ENCODE measurements at regions of chr3 and their contacts with region 1.

Region 1: GRCh38 chr3:10115326-10116137 is at the start of gene BRK1:
- DNase-seq: peak; percentile 98
- ATAC-seq: peak; percentile 96
- H3K4me3 ChIP-seq: peak within 1 kb of the TSS; percentile 61 to 96 (median 84)
- H3K4me3 Mint-ChIP-seq: peak within 1 kb of the TSS; percentile 94
- H3K27ac ChIP-seq: peak within 1 kb of the TSS; percentile 48 to 85
- H3K27ac Mint-ChIP-seq: peak within 1 kb of the TSS; percentile 97
- H3K4me1 ChIP-seq: peaks cover 16 to 27% of the 10 kb centered on the region in 2 donors
- H3K4me1 Mint-ChIP-seq: peaks cover 34% of the 10 kb centered on the region
- H3K27me3 ChIP-seq: no peaks in the 10 kb centered on the region
- H3K27me3 Mint-ChIP-seq: no peaks in the 10 kb centered on the region
- CTCF ChIP-seq: no peak
- total RNA-seq, gene BRK1: 82.8 and 86.3 TPM in 2 replicates

Region 2: GRCh38 chr3:9396700-9397521 is 718.6 kb before region 1 on chr3:
- CTCF ChIA-PET with region 1: no interaction called
- POLR2A ChIA-PET with region 1: no interaction called
- intact Hi-C with region 1: loop called (anchors 2 kb)
- DNase-seq: peak; percentile 99
- ATAC-seq: peak; percentile 70
- H3K4me3 ChIP-seq: peak overlapping the region; percentile 58 to 85 (median 67)
- H3K4me3 Mint-ChIP-seq: peak overlapping the region; percentile 89
- H3K27ac ChIP-seq: peak overlapping the region; percentile 94 to 96
- H3K27ac Mint-ChIP-seq: peak overlapping the region; percentile 100
- H3K4me1 ChIP-seq: peaks cover 40 to 56% of the 10 kb centered on the region in 2 donors
- H3K4me1 Mint-ChIP-seq: peaks cover 60% of the 10 kb centered on the region
- H3K27me3 ChIP-seq: no peaks in the 10 kb centered on the region
- H3K27me3 Mint-ChIP-seq: no peaks in the 10 kb centered on the region
- CTCF ChIP-seq: no peak

Region 3: GRCh38 chr3:9837701-9838582 is 277.6 kb before region 1 on chr3:
- CTCF ChIA-PET with region 1: no interaction called
- POLR2A ChIA-PET with region 1: no interaction called
- intact Hi-C with region 1: no loop called
- DNase-seq: no peak
- ATAC-seq: no peak
- H3K4me3 ChIP-seq: no peak overlapping the region
- H3K4me3 Mint-ChIP-seq: no peak overlapping the region
- H3K27ac ChIP-seq: no peak overlapping the region
- H3K27ac Mint-ChIP-seq: peak overlapping the region; percentile 26
- H3K4me1 ChIP-seq: peaks cover 1 to 8% of the 10 kb centered on the region in 2 donors
- H3K4me1 Mint-ChIP-seq: peaks cover 9% of the 10 kb centered on the region
- H3K27me3 ChIP-seq: no peaks in the 10 kb centered on the region
- H3K27me3 Mint-ChIP-seq: no peaks in the 10 kb centered on the region
- CTCF ChIP-seq: no peak

Region 4: DNA sequence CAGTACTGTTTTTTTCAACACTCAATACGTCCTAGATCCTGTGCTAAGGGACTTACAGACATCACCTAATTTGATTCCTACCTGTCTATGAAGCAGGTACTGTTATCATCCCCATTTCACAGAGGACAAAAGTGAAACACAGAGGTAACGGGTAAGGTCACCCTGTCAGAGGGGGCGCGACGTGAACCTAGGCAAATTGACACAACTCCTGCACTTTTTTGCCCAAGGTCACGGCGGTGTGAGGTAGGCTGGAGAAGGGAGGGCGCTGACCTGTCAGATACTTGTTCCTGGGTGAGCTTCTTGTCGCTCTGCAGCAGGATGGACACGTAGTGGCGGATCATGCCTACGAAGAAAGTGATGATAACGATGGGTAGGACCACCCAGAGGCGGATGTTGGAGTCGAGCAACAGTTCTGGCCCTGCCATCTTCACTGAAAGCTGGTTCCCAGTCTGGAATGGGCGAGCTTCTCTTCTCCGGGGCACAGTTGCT is 129.3 kb before region 1 on chr3:
- CTCF ChIA-PET with region 1: no interaction called
- POLR2A ChIA-PET with region 1: no interaction called
- intact Hi-C with region 1: loop called (anchors 1 kb)
- DNase-seq: no peak
- ATAC-seq: peak; percentile 28
- H3K4me3 ChIP-seq: peak overlapping the region; percentile 71 to 96 (median 82)
- H3K4me3 Mint-ChIP-seq: peak overlapping the region; percentile 98
- H3K27ac ChIP-seq: peak overlapping the region; percentile 88 to 97
- H3K27ac Mint-ChIP-seq: peak overlapping the region; percentile 100
- H3K4me1 ChIP-seq: peaks cover 16 to 22% of the 10 kb centered on the region in 2 donors
- H3K4me1 Mint-ChIP-seq: peaks cover 28% of the 10 kb centered on the region
- H3K27me3 ChIP-seq: no peaks in the 10 kb centered on the region
- H3K27me3 Mint-ChIP-seq: no peaks in the 10 kb centered on the region
- CTCF ChIP-seq: no peak

Region 5: DNA sequence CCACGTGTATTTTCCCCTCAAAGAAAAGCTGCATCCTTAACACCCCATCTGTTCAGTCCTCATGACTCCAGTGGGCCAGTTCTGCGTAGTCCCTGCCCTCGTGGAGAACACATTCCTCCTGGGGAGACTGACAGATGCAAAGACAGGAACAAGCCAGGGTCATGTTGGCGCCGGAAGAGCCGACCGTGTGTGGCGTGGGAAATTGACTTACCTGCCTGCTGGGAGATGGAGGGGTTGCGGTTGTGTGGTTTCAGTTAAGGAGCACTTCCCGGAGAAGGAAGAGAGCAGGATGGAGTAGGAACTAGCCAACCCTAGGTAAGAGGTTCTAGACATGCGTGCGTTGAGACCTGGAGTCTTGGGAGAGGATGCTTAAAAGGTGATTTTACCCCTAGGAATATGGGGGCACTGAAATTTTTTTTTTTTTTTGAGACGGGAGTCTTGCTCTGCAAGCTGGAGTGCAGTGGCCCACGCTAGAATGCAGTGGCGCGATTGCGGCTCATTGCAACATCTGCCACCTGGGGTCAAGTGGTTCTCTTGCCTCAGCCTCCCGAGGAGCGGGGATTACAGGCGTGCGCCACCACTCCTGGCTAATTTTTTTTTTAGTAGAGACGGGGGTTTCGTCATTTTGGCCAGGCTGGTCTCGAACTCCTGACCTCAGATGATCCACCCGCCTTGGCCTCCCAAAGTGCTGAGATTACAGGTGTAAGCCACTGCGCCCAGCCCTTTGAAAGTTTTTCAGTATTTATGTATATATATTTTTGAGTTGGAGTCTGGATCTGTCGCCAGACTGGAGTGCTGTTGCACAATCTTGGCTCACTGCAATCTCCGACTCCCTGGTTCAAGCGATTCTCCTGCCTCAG is 27.4 kb after region 1 on chr3:
- CTCF ChIA-PET with region 1: no interaction called
- POLR2A ChIA-PET with region 1: interaction called, 6 read pairs
- intact Hi-C with region 1: loop called (anchors 1 kb)
- DNase-seq: peak; percentile 31
- ATAC-seq: no peak
- H3K4me3 ChIP-seq: peak overlapping the region; percentile 8 to 91 (median 77)
- H3K4me3 Mint-ChIP-seq: peak overlapping the region; percentile 95
- H3K27ac ChIP-seq: peak overlapping the region; percentile 88 to 96
- H3K27ac Mint-ChIP-seq: peak overlapping the region; percentile 97
- H3K4me1 ChIP-seq: peaks cover 28 to 50% of the 10 kb centered on the region in 2 donors
- H3K4me1 Mint-ChIP-seq: peaks cover 32% of the 10 kb centered on the region
- H3K27me3 ChIP-seq: no peaks in the 10 kb centered on the region
- H3K27me3 Mint-ChIP-seq: no peaks in the 10 kb centered on the region
- CTCF ChIP-seq: no peak

Region 6: GRCh38 chr3:10198761-10199649 is 83.5 kb after region 1 on chr3:
- CTCF ChIA-PET with region 1: no interaction called
- POLR2A ChIA-PET with region 1: interaction called, 6 read pairs
- intact Hi-C with region 1: loop called (anchors 1 kb)
- DNase-seq: peak; percentile 94
- ATAC-seq: peak; percentile 63
- H3K4me3 ChIP-seq: peak overlapping the region in 2 of 5 experiments; percentile 9 to 40
- H3K4me3 Mint-ChIP-seq: peak overlapping the region; percentile 82
- H3K27ac ChIP-seq: peak overlapping the region; percentile 96 to 97
- H3K27ac Mint-ChIP-seq: peak overlapping the region; percentile 97
- H3K4me1 ChIP-seq: peaks cover 76 to 80% of the 10 kb centered on the region in 2 donors
- H3K4me1 Mint-ChIP-seq: peaks cover 67% of the 10 kb centered on the region
- H3K27me3 ChIP-seq: no peaks in the 10 kb centered on the region
- H3K27me3 Mint-ChIP-seq: no peaks in the 10 kb centered on the region
- CTCF ChIP-seq: no peak

Measured in B cell (primary cell).